Activated B cell treated with CpG ODN at 0.5 μM for 24 hours (primary cell): ENCODE measurements at regions of chr15 and their contacts with region 1.

Region 1: GRCh38 chr15:90233376-90234095 is at the start of gene CIB1:
- DNase-seq: peak; percentile 92
- ATAC-seq: peak; percentile 86
- H3K4me3 Mint-ChIP-seq: peak within 1 kb of the TSS; percentile 87
- H3K27ac Mint-ChIP-seq: peak within 1 kb of the TSS; percentile 97
- H3K4me1 Mint-ChIP-seq: peaks cover 50% of the 10 kb centered on the region
- H3K27me3 Mint-ChIP-seq: no peaks in the 10 kb centered on the region
- CTCF ChIP-seq: no peak
- total RNA-seq, gene CIB1: 96.6 and 105 TPM in 2 replicates

Region 2: GRCh38 chr15:89690276-89691218 is 543.0 kb before region 1 on chr15 and contains the starts of genes PEX11A and WDR93:
- CTCF ChIA-PET with region 1: no interaction called
- POLR2A ChIA-PET with region 1: no interaction called
- intact Hi-C with region 1: loop called (anchors 5 kb)
- DNase-seq: peak; percentile 73
- ATAC-seq: peak; percentile 91
- H3K4me3 Mint-ChIP-seq: peak within 1 kb of the TSS; percentile 90
- H3K27ac Mint-ChIP-seq: peak within 1 kb of the TSS; percentile 77
- H3K4me1 Mint-ChIP-seq: peaks cover 19% of the 10 kb centered on the region
- H3K27me3 Mint-ChIP-seq: no peaks in the 10 kb centered on the region
- CTCF ChIP-seq: no peak
- total RNA-seq, gene PEX11A: 0.84 and 1.6 TPM in 2 replicates
- total RNA-seq, gene WDR93: 0.10 and 0.16 TPM in 2 replicates

Region 3: GRCh38 chr15:89993349-89993748 is 240.2 kb before region 1 on chr15:
- CTCF ChIA-PET with region 1: no interaction called
- POLR2A ChIA-PET with region 1: no interaction called
- intact Hi-C with region 1: no loop called
- DNase-seq: no peak
- ATAC-seq: no peak
- H3K4me3 Mint-ChIP-seq: no peak overlapping the region
- H3K27ac Mint-ChIP-seq: no peak overlapping the region
- H3K4me1 Mint-ChIP-seq: no peaks in the 10 kb centered on the region
- H3K27me3 Mint-ChIP-seq: no peaks in the 10 kb centered on the region
- CTCF ChIP-seq: no peak

Region 4: DNA sequence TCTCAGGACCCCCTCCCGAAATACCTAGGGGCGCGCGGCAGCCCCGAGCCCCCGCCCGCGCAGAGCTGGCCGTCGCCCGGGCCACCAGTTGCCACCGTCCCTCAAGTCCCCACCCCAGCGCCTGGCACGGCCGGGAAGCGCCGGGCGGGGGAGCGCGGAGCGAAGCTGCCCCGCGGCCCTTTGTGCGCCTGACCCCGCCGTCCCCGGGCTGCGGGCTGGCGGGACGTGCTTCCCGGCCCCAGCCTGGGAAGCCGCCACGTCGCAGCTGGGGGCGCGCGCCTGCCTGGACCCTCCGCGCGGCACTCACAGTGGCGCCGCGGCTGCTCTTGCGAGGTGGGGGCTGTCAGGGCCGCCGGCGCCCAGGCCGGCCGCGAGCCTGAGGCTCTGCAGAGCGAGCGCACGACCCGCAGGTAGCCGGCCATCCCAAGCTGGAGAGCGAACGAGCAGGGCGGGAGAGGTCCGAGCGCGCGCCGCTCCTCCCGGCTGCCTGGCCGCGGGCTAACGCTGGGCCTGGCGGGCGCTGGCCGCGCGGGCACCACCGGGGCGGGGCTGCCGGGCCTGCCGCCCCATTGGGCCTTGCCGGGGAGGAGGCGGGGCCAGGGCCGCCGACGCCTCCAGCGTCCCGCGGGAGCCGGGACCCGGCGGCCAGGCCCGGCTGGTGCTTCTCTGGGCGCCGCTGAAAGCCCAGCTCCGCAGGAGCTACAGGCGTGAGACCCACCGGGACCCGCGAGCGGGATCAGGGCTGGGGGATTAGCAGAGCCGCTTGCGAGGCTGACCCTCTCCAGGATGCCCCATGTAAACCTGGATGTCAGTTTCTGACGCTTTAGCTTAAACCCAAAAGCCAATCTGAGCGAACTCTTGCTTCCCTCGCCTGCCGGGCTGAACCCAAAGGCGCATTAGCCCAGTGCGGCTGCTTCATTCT is 131.3 kb before region 1 on chr15 and contains the start of gene IDH2:
- CTCF ChIA-PET with region 1: no interaction called
- POLR2A ChIA-PET with region 1: interaction called, 3 read pairs
- intact Hi-C with region 1: loop called (anchors 5 kb)
- DNase-seq: peak; percentile 78
- ATAC-seq: peak; percentile 88
- H3K4me3 Mint-ChIP-seq: peak within 1 kb of the TSS; percentile 89
- H3K27ac Mint-ChIP-seq: peak within 1 kb of the TSS; percentile 83
- H3K4me1 Mint-ChIP-seq: peaks cover 50% of the 10 kb centered on the region
- H3K27me3 Mint-ChIP-seq: peaks cover 9% of the 10 kb centered on the region
- CTCF ChIP-seq: no peak
- total RNA-seq, gene IDH2: 49.1 and 51.2 TPM in 2 replicates

Region 5: GRCh38 chr15:90191794-90192509 is 41.6 kb before region 1 on chr15:
- CTCF ChIA-PET with region 1: interaction called, 19 read pairs
- POLR2A ChIA-PET with region 1: interaction called, 63 read pairs
- intact Hi-C with region 1: loop called (anchors 1 kb)
- DNase-seq: peak; percentile 69
- ATAC-seq: peak; percentile 75
- H3K4me3 Mint-ChIP-seq: peak overlapping the region; percentile 77
- H3K27ac Mint-ChIP-seq: peak overlapping the region; percentile 98
- H3K4me1 Mint-ChIP-seq: peaks cover 97% of the 10 kb centered on the region
- H3K27me3 Mint-ChIP-seq: no peaks in the 10 kb centered on the region
- CTCF ChIP-seq: no peak

Region 6: DNA sequence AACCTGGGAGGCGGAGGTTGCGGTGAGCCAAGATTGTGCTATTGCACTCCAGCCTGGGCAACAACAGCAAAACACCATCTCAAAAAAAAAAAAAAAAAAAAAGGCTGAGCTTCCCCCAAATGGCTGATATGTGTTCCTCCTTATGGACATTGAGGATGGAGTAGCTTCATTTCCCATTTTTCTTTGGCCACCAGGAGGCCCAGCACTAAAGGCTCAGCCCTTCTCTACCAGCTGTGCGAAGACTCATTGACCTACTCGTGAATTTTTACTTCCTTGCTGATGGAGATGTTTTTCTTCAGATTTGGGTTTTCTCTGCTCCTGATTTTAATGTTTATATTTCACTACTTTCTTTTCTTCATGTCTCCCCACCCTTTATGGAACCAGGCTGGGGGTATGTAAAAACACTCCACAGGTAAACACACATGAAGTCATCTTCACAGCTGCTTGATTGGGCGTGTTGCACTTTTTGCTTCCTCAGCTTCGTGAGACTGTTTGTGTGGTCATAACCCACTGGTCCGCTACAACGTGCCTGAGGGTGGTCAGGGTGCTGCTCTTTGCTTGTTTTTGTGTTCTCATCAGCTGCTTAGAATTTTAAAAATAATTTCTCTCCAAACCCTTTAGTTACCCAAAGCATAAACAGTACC is 18.9 kb before region 1 on chr15:
- CTCF ChIA-PET with region 1: interaction called, 44 read pairs
- POLR2A ChIA-PET with region 1: interaction called, 44 read pairs
- intact Hi-C with region 1: loop called (anchors 1 kb)
- DNase-seq: no peak
- ATAC-seq: peak; percentile 29
- H3K4me3 Mint-ChIP-seq: peak overlapping the region; percentile 59
- H3K27ac Mint-ChIP-seq: peak overlapping the region; percentile 95
- H3K4me1 Mint-ChIP-seq: peaks cover 97% of the 10 kb centered on the region
- H3K27me3 Mint-ChIP-seq: no peaks in the 10 kb centered on the region
- CTCF ChIP-seq: no peak

Region 7: DNA sequence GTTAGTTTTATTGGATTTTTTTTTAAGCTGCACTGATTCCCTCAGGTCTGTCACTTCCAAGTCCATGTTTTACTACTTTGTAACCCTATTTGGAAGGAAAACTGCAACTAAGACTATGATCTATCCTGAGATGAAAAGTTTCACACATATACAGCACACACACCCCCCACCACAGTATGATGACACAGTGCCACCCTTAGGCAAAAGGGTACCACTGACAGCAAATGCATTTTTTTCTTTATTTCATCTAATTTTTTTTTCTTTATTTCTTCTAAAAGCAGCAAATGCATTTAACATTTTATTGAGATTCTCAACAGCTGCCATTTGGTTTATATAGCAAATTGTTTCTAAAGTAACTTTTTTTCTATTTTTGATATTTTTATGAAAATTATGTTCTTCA is 53.1 kb after region 1 on chr15:
- CTCF ChIA-PET with region 1: no interaction called
- POLR2A ChIA-PET with region 1: interaction called, 13 read pairs
- intact Hi-C with region 1: loop called (anchors 2 kb)
- DNase-seq: no peak
- ATAC-seq: peak; percentile 68
- H3K4me3 Mint-ChIP-seq: no peak overlapping the region
- H3K27ac Mint-ChIP-seq: no peak overlapping the region
- H3K4me1 Mint-ChIP-seq: peaks cover 3% of the 10 kb centered on the region
- H3K27me3 Mint-ChIP-seq: no peaks in the 10 kb centered on the region
- CTCF ChIP-seq: no peak